ENCODE measurements at regions of chr16 and their contacts with region 1.

Region 1: GRCh38 chr16:75794426-75794825 is 68.1 kb upstream of the CPHXL start:
- DNase-seq: no peak
- ATAC-seq: peak in 3 of 4 donors; percentile 27 to 56 (median 36)
- H3K4me3 ChIP-seq: no peak overlapping the region
- H3K27ac ChIP-seq: no peak overlapping the region
- H3K4me1 ChIP-seq: no peaks in the 10 kb centered on the region
- H3K27me3 ChIP-seq: no peaks in the 10 kb centered on the region
- CTCF ChIP-seq: no peak
- POLR2A ChIP-seq: no peak

Region 2: DNA sequence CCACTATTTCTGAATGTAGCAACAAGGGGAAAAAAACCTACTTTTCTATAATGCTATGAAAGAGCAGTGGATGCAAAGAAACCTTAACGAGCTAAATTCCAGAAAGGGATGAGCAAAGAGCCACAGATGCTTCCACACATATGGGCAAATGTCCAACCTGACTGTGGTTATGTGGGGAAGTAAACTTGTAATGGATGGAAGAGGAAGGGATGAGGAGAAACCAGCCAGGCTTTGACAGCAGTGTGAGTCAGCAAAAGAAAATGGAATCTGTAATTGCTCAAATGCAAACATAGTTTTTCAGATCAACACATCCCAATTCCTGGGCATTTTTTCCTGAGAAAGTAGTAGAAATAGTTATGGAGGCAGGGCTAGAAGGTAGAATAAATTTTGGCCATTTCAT is 136.6 kb after region 1 on chr16:
- intact Hi-C with region 1: no loop called
- DNase-seq: no peak
- ATAC-seq: no peak
- H3K4me3 ChIP-seq: no peak overlapping the region
- H3K27ac ChIP-seq: no peak overlapping the region
- H3K4me1 ChIP-seq: no peaks in the 10 kb centered on the region
- H3K27me3 ChIP-seq: no peaks in the 10 kb centered on the region
- CTCF ChIP-seq: no peak
- POLR2A ChIP-seq: no peak

Region 3: GRCh38 chr16:76653390-76654026 is 859.1 kb after region 1 on chr16:
- intact Hi-C with region 1: loop called in 1 of 2 experiments (anchors 10 kb)
- DNase-seq: no peak
- ATAC-seq: peak; percentile 91 to 96 (median 94)
- H3K4me3 ChIP-seq: no peak overlapping the region
- H3K27ac ChIP-seq: no peak overlapping the region
- H3K4me1 ChIP-seq: no peaks in the 10 kb centered on the region
- H3K27me3 ChIP-seq: no peaks in the 10 kb centered on the region
- CTCF ChIP-seq: peak; percentile 61 to 78 (median 68)
- POLR2A ChIP-seq: no peak

Region 4: DNA sequence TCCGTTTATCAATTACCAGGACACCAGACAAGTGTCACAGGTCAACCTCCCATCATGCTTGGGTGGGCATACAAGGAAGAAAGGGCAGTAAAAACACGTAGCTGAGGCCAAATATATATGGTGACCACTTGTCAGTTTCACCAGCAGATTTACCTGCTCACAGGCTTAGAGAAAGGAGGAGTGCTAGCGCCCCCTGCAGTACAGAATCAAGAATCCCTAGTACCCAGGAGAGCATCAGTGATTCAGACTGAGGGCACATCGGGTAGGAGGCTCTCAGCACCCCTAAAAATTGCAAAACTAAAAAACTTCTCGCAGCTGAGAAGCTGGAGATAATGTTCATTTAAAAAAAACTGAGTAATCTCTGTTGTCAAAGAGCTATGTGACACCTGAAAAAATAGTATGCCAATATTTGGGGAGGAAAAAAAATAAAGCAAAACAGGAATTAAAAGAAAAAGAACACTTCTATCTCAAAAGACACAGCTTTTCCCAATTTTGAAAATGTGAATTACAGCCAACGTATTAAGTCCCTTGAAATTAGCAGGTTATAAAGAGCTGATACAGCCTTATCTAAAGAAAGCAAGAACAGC is 1375.3 kb after region 1 on chr16:
- intact Hi-C with region 1: loop called in 1 of 2 experiments (anchors 10 kb)
- DNase-seq: peak in 1 of 3 donors; percentile 46
- ATAC-seq: peak; percentile 55 to 70 (median 66)
- H3K4me3 ChIP-seq: no peak overlapping the region
- H3K27ac ChIP-seq: no peak overlapping the region
- H3K4me1 ChIP-seq: no peaks in the 10 kb centered on the region
- H3K27me3 ChIP-seq: no peaks in the 10 kb centered on the region
- CTCF ChIP-seq: peak; percentile 46 to 67 (median 56)
- POLR2A ChIP-seq: no peak

Measured in right lobe of liver (tissue), 6 donors.